ENCODE measurements at regions of chr2 and their contacts with region 1.

Region 1: GRCh38 chr2:235050992-235051351 is 99.2 kb downstream of the SH3BP4 start:
- DNase-seq: peak; percentile 90 to 97
- H3K4me3 ChIP-seq: no peak overlapping the region
- H3K27ac ChIP-seq: peak overlapping the region; percentile 47 to 67
- H3K4me1 ChIP-seq: peaks cover 6 to 13% of the 10 kb centered on the region in 2 donors
- H3K27me3 ChIP-seq: no peaks in the 10 kb centered on the region
- CTCF ChIP-seq: no peak

Region 2: DNA sequence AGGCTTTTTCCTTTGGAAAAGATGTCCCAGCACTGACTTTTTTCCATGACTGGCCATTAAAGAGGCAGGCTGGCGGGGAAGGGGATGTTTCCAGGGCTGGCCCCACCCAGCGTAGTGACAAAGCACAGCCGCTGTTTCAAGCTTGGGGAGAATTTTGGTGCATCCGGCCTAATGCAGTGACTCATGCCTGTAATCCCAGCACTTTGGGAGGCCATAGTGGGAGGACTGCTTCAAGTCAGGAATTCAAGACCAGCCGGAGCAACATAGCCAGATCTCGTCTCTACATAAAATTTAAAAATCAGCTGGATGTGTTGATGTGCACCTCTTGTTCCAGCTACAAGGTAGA is 177.2 kb before region 1 on chr2:
- intact Hi-C with region 1: no loop called
- DNase-seq: no peak
- H3K4me3 ChIP-seq: no peak overlapping the region
- H3K27ac ChIP-seq: no peak overlapping the region
- H3K4me1 ChIP-seq: no peaks in the 10 kb centered on the region
- H3K27me3 ChIP-seq: no peaks in the 10 kb centered on the region
- CTCF ChIP-seq: no peak

Region 3: GRCh38 chr2:234951664-234952269 is 99.2 kb before region 1 on chr2 and contains the start of gene SH3BP4:
- intact Hi-C with region 1: loop called (anchors 2 kb)
- DNase-seq: peak; percentile 26 to 89
- H3K4me3 ChIP-seq: peak within 1 kb of the TSS; percentile 86 to 96
- H3K27ac ChIP-seq: peak within 1 kb of the TSS; percentile 80 to 82
- H3K4me1 ChIP-seq: peaks cover 3 to 8% of the 10 kb centered on the region in 2 donors
- H3K27me3 ChIP-seq: no peaks in the 10 kb centered on the region
- CTCF ChIP-seq: no peak
- total RNA-seq, gene SH3BP4: 36.7 TPM